ENCODE measurements at regions of chr3 and their contacts with region 1.

Region 1: GRCh38 chr3:132029182-132029902 is 5.5 kb downstream of the CPNE4 start:
- DNase-seq: peak; percentile 84
- H3K4me3 Mint-ChIP-seq: no peak overlapping the region
- H3K27ac Mint-ChIP-seq: no peak overlapping the region
- H3K4me1 Mint-ChIP-seq: peaks cover 3% of the 10 kb centered on the region
- H3K27me3 Mint-ChIP-seq: peaks cover 49% of the 10 kb centered on the region

Region 2: GRCh38 chr3:131033480-131034080 is 995.8 kb before region 1 on chr3:
- CTCF ChIA-PET with region 1: interaction called, 4 read pairs
- intact Hi-C with region 1: loop called (anchors 1 kb)
- DNase-seq: peak; percentile 22
- H3K4me3 Mint-ChIP-seq: no peak overlapping the region
- H3K27ac Mint-ChIP-seq: no peak overlapping the region
- H3K4me1 Mint-ChIP-seq: no peaks in the 10 kb centered on the region
- H3K27me3 Mint-ChIP-seq: no peaks in the 10 kb centered on the region

Region 3: GRCh38 chr3:131231710-131232389 is 797.5 kb before region 1 on chr3:
- CTCF ChIA-PET with region 1: no interaction called
- intact Hi-C with region 1: loop called (anchors 10 kb)
- DNase-seq: no peak
- H3K4me3 Mint-ChIP-seq: no peak overlapping the region
- H3K27ac Mint-ChIP-seq: no peak overlapping the region
- H3K4me1 Mint-ChIP-seq: no peaks in the 10 kb centered on the region
- H3K27me3 Mint-ChIP-seq: no peaks in the 10 kb centered on the region

Region 4: GRCh38 chr3:131549340-131549739 is 480.0 kb before region 1 on chr3:
- CTCF ChIA-PET with region 1: interaction called, 3 read pairs
- intact Hi-C with region 1: loop called (anchors 1 kb)
- DNase-seq: peak; percentile 33
- H3K4me3 Mint-ChIP-seq: no peak overlapping the region
- H3K27ac Mint-ChIP-seq: no peak overlapping the region
- H3K4me1 Mint-ChIP-seq: no peaks in the 10 kb centered on the region
- H3K27me3 Mint-ChIP-seq: peaks cover 31% of the 10 kb centered on the region

Region 5: DNA sequence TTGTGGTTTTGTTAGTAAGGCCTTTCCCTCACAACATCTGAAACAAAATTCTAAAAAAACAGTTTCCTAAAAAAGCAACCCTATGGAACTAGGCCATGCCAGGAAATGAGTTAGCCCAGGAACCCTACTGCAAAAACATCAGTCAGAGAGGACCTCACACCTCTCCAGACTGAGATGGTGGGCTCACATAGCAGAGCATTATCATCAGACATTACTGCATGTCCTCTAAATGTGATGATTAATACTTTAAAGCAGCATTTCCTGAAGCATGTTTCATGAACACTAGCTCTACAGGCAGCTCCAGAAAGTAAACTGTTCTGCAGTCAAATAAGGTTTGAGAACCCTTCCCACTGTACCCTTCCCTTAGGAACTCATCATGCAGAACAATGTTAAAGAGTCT is 294.2 kb before region 1 on chr3:
- CTCF ChIA-PET with region 1: no interaction called
- intact Hi-C with region 1: loop called (anchors 5 kb)
- DNase-seq: no peak
- H3K4me3 Mint-ChIP-seq: no peak overlapping the region
- H3K27ac Mint-ChIP-seq: no peak overlapping the region
- H3K4me1 Mint-ChIP-seq: peaks cover 17% of the 10 kb centered on the region
- H3K27me3 Mint-ChIP-seq: peaks cover 12% of the 10 kb centered on the region

Region 6: DNA sequence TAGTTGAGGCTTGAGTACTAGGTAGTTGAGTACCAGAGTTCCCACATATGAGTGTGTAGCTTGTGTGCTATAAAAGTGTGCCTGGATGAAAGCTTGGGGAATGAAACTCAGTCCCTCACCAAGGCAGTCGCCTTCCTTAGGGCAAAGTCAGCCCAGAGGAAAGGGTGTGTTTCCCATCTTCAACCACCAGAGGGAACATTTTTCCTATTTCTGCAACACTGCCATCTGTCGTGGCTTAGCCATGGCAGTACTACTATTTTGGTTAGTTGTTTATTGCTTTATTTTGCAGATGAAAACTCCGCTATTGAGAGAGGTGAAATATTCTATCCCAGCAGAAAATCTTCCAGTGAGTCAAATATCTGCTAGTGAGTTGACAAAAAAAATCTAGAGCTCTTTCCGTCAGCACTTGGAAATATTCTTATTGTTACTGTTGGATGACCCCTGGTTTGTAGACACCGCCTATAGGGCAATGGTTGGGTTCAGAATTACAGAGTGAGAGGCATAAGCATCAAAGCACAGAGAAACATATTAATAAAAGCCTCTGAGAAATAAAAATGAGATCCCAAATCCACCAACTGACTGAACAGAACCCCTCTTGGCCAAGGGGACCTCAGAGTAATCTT is 234.5 kb before region 1 on chr3:
- CTCF ChIA-PET with region 1: interaction called, 31 read pairs
- intact Hi-C with region 1: loop called (anchors 1 kb)
- DNase-seq: peak; percentile 43
- H3K4me3 Mint-ChIP-seq: no peak overlapping the region
- H3K27ac Mint-ChIP-seq: no peak overlapping the region
- H3K4me1 Mint-ChIP-seq: peaks cover 8% of the 10 kb centered on the region
- H3K27me3 Mint-ChIP-seq: peaks cover 13% of the 10 kb centered on the region

Region 7: DNA sequence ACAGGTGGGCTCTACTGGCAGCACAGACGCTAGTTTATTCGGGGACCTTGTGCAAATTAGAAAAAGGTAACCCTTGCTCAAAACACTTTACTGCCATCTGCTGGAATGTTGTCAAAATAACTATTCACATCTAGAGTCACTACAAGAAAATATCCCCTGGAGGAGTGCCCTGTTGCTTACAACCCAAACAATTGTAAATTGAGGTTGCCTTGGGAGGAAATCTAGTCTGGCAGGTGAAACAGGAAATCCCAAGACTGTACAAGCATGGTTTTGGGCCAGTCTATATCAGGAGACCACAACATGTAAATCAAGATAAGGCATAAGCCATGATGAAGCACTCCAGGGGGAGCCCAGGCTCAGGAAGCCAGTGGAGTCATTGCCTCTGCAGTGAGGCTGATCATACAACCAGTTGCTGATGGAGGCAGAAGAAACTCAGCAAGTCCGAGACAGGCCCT is 151.0 kb after region 1 on chr3:
- CTCF ChIA-PET with region 1: interaction called, 3 read pairs
- intact Hi-C with region 1: loop called (anchors 2 kb)
- DNase-seq: no peak
- H3K4me3 Mint-ChIP-seq: no peak overlapping the region
- H3K27ac Mint-ChIP-seq: no peak overlapping the region
- H3K4me1 Mint-ChIP-seq: peaks cover 3% of the 10 kb centered on the region
- H3K27me3 Mint-ChIP-seq: peaks cover 5% of the 10 kb centered on the region